ENCODE measurements at regions of chr6 and their contacts with region 1.

Region 1: GRCh38 chr6:47097092-47097945 is 55.2 kb upstream of the ADGRF1 start:
- DNase-seq: peak in 6 of 9 experiments; percentile 21 to 65 (median 38)
- ATAC-seq: peak; percentile 56
- H3K4me3 ChIP-seq: no peak overlapping the region
- H3K4me3 Mint-ChIP-seq: no peak overlapping the region
- H3K27ac ChIP-seq: no peak overlapping the region
- H3K27ac Mint-ChIP-seq: no peak overlapping the region
- H3K4me1 ChIP-seq: no peaks in the 10 kb centered on the region
- H3K4me1 Mint-ChIP-seq: no peaks in the 10 kb centered on the region
- H3K27me3 ChIP-seq: no peaks in the 10 kb centered on the region
- H3K27me3 Mint-ChIP-seq: peaks cover 2% of the 10 kb centered on the region
- CTCF ChIP-seq: no peak

Region 2: GRCh38 chr6:46367354-46368168 is 729.8 kb before region 1 on chr6:
- CTCF ChIA-PET with region 1: no interaction called
- POLR2A ChIA-PET with region 1: no interaction called
- intact Hi-C with region 1: no loop called
- DNase-seq: no peak
- ATAC-seq: no peak
- H3K4me3 ChIP-seq: no peak overlapping the region
- H3K4me3 Mint-ChIP-seq: no peak overlapping the region
- H3K27ac ChIP-seq: no peak overlapping the region
- H3K27ac Mint-ChIP-seq: no peak overlapping the region
- H3K4me1 ChIP-seq: no peaks in the 10 kb centered on the region
- H3K4me1 Mint-ChIP-seq: no peaks in the 10 kb centered on the region
- H3K27me3 ChIP-seq: no peaks in the 10 kb centered on the region
- H3K27me3 Mint-ChIP-seq: peaks cover 2% of the 10 kb centered on the region
- CTCF ChIP-seq: no peak

Region 3: GRCh38 chr6:46903175-46903574 is 194.1 kb before region 1 on chr6:
- CTCF ChIA-PET with region 1: no interaction called
- POLR2A ChIA-PET with region 1: no interaction called
- intact Hi-C with region 1: no loop called
- DNase-seq: no peak
- ATAC-seq: no peak
- H3K4me3 ChIP-seq: no peak overlapping the region
- H3K4me3 Mint-ChIP-seq: no peak overlapping the region
- H3K27ac ChIP-seq: no peak overlapping the region
- H3K27ac Mint-ChIP-seq: no peak overlapping the region
- H3K4me1 ChIP-seq: no peaks in the 10 kb centered on the region
- H3K4me1 Mint-ChIP-seq: no peaks in the 10 kb centered on the region
- H3K27me3 ChIP-seq: no peaks in the 10 kb centered on the region
- H3K27me3 Mint-ChIP-seq: peaks cover 13% of the 10 kb centered on the region
- CTCF ChIP-seq: no peak

Region 4: DNA sequence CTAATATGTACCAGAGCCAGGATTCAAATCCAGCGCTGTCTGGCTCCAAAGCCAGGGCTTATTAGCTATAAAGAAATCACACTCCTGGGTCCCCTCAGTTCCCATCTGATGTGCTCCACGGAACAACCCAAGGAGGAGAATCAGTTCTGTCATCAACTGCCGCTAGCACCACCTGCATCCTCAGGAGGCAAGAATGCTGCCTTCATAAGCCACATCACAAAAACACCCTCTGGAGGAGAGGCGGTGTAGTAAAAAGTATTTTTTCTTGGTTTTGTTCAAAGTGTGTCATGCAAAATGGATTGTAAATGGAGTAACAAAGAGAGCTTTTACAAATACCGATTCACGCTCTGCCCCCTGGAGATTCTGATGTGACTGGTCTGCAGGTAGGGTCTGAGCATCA is 155.3 kb after region 1 on chr6:
- CTCF ChIA-PET with region 1: no interaction called
- POLR2A ChIA-PET with region 1: no interaction called
- intact Hi-C with region 1: loop called (anchors 1 to 5 kb)
- DNase-seq: peak in 2 of 9 experiments; percentile 6 to 25
- ATAC-seq: no peak
- H3K4me3 ChIP-seq: no peak overlapping the region
- H3K4me3 Mint-ChIP-seq: no peak overlapping the region
- H3K27ac ChIP-seq: no peak overlapping the region
- H3K27ac Mint-ChIP-seq: no peak overlapping the region
- H3K4me1 ChIP-seq: no peaks in the 10 kb centered on the region
- H3K4me1 Mint-ChIP-seq: no peaks in the 10 kb centered on the region
- H3K27me3 ChIP-seq: no peaks in the 10 kb centered on the region
- H3K27me3 Mint-ChIP-seq: peaks cover 2% of the 10 kb centered on the region
- CTCF ChIP-seq: no peak